OCI-LY7 (cell line): ENCODE measurements at regions of chr2 and their contacts with region 1.

Region 1: DNA sequence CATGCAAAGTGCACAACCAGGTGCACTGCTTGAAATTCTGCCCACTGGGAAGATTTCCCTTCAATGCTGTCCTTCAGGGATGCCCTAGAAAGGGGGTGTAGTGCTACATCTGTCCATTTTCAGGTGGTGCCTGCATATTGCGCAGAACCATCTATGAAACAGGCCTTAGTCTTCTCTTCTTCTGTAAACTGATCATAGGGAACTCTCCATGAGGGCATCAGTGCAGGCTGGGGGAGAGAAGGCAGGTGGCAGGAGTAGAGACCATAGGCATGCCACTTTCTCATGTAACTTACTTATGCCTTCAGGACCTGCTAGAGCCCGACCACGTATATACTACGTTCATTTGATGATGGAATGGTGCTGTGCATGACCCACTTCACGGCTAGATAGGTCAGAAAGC is 912.1 kb downstream of the SLC4A3 start:
- DNase-seq: no peak
- H3K4me3 ChIP-seq: no peak overlapping the region
- H3K27ac ChIP-seq: no peak overlapping the region
- H3K4me1 ChIP-seq: no peaks in the 10 kb centered on the region
- CTCF ChIP-seq: no peak

Region 2: DNA sequence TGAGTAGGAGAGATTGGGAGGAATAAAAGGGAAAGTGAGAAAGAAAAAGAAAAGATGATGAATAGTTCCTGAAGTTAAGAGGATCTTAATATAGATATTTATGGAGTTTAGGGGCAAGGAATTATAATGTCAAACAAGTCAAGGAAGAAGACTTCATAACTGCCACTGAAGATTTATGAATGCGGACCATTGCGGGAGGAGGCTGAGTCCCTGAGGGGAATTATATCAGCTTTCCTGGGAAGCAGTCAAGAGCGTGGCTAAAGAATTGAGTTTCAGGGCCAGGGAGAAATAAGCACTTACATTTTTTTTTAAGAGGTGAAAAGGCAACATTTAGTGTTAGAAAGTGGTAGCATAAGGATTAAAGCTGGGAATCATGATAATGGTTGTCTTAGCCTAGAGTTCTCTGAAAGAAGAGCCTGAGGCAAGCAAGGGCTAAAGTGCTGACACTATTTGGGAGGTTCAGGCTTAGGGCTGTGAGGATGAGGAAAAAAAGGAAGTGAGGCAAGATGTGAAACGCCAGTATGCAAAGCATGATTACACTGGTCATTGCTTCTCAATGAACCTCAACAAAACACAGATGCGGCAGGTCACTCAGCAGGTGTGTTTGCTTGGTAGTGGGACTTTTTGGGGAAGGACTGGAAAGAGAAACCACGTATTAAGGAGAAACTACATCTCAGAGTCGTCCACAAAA is 694.9 kb before region 1 on chr2:
- CTCF ChIA-PET with region 1: no interaction called
- POLR2A ChIA-PET with region 1: no interaction called
- intact Hi-C with region 1: no loop called
- DNase-seq: peak; percentile 56
- H3K4me3 ChIP-seq: peak overlapping the region; percentile 6
- H3K27ac ChIP-seq: no peak overlapping the region
- H3K4me1 ChIP-seq: peaks cover 13% of the 10 kb centered on the region
- CTCF ChIP-seq: no peak

Region 3: GRCh38 chr2:220560192-220560591 is 20.7 kb after region 1 on chr2:
- CTCF ChIA-PET with region 1: no interaction called
- POLR2A ChIA-PET with region 1: no interaction called
- intact Hi-C with region 1: no loop called
- DNase-seq: no peak
- H3K4me3 ChIP-seq: no peak overlapping the region
- H3K27ac ChIP-seq: no peak overlapping the region
- H3K4me1 ChIP-seq: no peaks in the 10 kb centered on the region
- CTCF ChIP-seq: no peak

Region 4: GRCh38 chr2:221581986-221582385 is 1042.5 kb after region 1 on chr2:
- CTCF ChIA-PET with region 1: no interaction called
- POLR2A ChIA-PET with region 1: no interaction called
- intact Hi-C with region 1: loop called (anchors 5 kb)
- DNase-seq: no peak
- H3K4me3 ChIP-seq: no peak overlapping the region
- H3K27ac ChIP-seq: no peak overlapping the region
- H3K4me1 ChIP-seq: no peaks in the 10 kb centered on the region
- CTCF ChIP-seq: no peak